Activated CD4-positive, alpha-beta memory T cell treated with anti-CD3 and anti-CD28 coated beads for 36 hours (primary cell): ENCODE measurements at regions of chr1 and their contacts with region 1.

Region 1: GRCh38 chr1:40078512-40079333 is 18.3 kb downstream of the PPT1 start:
- DNase-seq: peak; percentile 44
- H3K4me3 Mint-ChIP-seq: no peak overlapping the region
- H3K27ac Mint-ChIP-seq: no peak overlapping the region
- H3K4me1 Mint-ChIP-seq: peaks cover 10% of the 10 kb centered on the region
- H3K27me3 Mint-ChIP-seq: no peaks in the 10 kb centered on the region

Region 2: GRCh38 chr1:40064797-40065499 is 13.8 kb before region 1 on chr1:
- CTCF ChIA-PET with region 1: interaction called, 25 read pairs
- POLR2A ChIA-PET with region 1: no interaction called
- intact Hi-C with region 1: no loop called
- DNase-seq: no peak
- H3K4me3 Mint-ChIP-seq: no peak overlapping the region
- H3K27ac Mint-ChIP-seq: peak overlapping the region; percentile 68
- H3K4me1 Mint-ChIP-seq: peaks cover 58% of the 10 kb centered on the region
- H3K27me3 Mint-ChIP-seq: no peaks in the 10 kb centered on the region

Region 3: GRCh38 chr1:40090652-40091355 is 12.1 kb after region 1 on chr1:
- CTCF ChIA-PET with region 1: interaction called, 24 read pairs
- POLR2A ChIA-PET with region 1: interaction called, 3 read pairs
- intact Hi-C with region 1: no loop called
- DNase-seq: no peak
- H3K4me3 Mint-ChIP-seq: no peak overlapping the region
- H3K27ac Mint-ChIP-seq: no peak overlapping the region
- H3K4me1 Mint-ChIP-seq: peaks cover 19% of the 10 kb centered on the region
- H3K27me3 Mint-ChIP-seq: no peaks in the 10 kb centered on the region